ENCODE measurements at regions of chr1 and their contacts with region 1.

Region 1: DNA sequence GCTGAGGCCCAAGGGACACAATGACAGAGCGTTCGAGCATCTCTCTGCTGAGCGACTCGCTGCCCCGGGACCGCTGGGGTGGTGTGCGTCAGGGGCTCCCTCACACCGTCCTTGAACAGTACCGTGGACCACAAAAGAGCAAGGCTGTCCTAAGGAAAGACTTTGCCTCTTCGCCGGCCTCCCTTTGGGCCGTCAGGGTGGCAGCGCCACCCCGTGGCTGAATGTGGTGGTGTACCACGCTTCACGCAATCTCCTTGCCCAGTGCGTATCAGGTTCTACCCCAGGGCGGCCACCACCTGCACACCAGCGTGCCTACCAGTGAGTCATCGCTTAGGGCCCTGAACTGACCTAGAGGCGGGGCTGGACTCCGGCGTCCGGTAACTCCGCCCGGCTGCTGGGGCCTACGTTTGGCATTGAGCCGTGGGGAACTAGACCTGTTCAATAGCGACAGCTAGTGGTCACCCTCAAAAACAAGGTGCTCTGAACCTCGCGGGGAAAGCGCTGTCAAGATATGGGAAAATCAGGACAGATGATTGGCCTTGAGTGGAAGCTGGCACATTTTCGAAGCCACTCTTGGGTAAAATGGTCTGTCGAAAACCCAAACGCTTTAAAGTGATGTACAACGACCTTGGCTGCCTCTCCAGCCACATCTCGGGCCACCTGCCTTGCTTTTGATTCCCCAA is 8.1 kb upstream of the TRAF3IP3 start:
- DNase-seq: peak; percentile 98
- ATAC-seq: peak; percentile 100
- H3K4me3 ChIP-seq: no peak overlapping the region
- H3K27ac ChIP-seq: no peak overlapping the region
- H3K4me1 ChIP-seq: peaks cover 0 to 14% of the 10 kb centered on the region in 2 experiments; a peak in 2 of 4 replicates
- H3K27me3 ChIP-seq: no peaks in the 10 kb centered on the region
- CTCF ChIP-seq: peak; percentile 88 to 97 (median 94)
- POLR2A ChIP-seq: no peak
- RAD21 ChIP-seq: peak; percentile 87

Region 2: GRCh38 chr1:209576798-209577197 is 170.9 kb before region 1 on chr1:
- CTCF ChIA-PET with region 1: interaction called, 8 read pairs
- POLR2A ChIA-PET with region 1: no interaction called
- RAD21 ChIA-PET with region 1: interaction called in 1 of 2 experiments, 3 read pairs
- intact Hi-C with region 1: loop called (anchors 1 kb)
- DNase-seq: peak; percentile 73
- ATAC-seq: peak; percentile 100
- H3K4me3 ChIP-seq: no peak overlapping the region
- H3K27ac ChIP-seq: no peak overlapping the region
- H3K4me1 ChIP-seq: peaks cover 0 to 9% of the 10 kb centered on the region in 2 experiments; a peak in 1 of 4 replicates
- H3K27me3 ChIP-seq: 0 out of 2 replicates have a peak, but pooled peaks cover 16% of the 10 kb centered on the region
- CTCF ChIP-seq: peak; percentile 92 to 96 (median 93)
- POLR2A ChIP-seq: no peak
- RAD21 ChIP-seq: peak; percentile 95

Region 3: DNA sequence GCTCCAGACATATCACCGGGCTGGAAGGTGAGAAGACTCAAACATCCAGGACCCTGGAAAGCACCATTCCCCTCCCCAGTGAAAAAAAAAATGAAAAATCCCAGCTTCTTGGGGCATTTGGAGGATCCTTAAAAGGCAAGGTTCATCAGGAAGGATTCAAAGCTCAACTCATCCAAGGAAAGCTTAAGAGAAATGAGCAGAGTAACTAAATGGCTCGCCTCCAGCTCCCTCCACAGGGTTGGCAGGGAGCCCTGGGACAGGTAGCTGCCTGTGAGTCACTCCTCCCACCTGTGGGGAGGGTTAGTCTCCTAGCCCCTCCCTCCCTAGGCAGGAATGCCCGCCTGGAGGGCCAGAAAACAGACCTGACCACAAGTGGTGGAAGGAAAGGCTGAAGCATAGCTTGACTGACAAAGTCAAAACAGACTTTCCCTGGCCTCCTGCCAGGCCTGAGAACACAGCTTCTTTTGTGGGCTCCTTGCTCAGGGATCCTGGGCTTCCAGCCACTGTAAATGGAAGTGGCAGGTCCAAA is 94.8 kb before region 1 on chr1:
- CTCF ChIA-PET with region 1: interaction called, 7 read pairs
- POLR2A ChIA-PET with region 1: interaction called, 3 read pairs
- RAD21 ChIA-PET with region 1: no interaction called
- intact Hi-C with region 1: loop called (anchors 1 kb)
- DNase-seq: peak; percentile 98
- ATAC-seq: peak; percentile 74
- H3K4me3 ChIP-seq: peak overlapping the region; percentile 46 to 57
- H3K27ac ChIP-seq: peak overlapping the region; percentile 74
- H3K4me1 ChIP-seq: peaks cover 71 to 98% of the 10 kb centered on the region in 2 experiments
- H3K27me3 ChIP-seq: no peaks in the 10 kb centered on the region
- CTCF ChIP-seq: no peak
- POLR2A ChIP-seq: no peak
- RAD21 ChIP-seq: no peak

Region 4: DNA sequence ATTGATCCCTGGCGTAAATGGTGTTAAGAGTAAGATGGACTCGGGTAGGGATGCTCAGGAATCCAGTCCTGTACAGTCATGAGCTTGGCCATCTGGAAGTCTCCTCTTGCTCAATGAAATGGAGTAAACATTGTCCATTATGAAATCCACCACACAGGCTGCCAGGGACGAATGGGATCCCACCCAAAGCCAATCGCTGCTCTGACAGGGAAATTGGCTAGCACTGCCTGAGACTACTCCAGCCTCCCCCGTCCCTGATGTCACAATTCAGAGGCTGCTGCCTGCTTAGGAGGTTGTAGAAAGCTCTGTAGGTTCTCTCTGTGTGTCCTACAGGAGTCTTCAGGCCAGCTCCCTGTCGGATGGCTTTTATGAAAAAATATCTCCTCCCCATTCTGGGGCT is 43.1 kb before region 1 on chr1 and contains the start of gene HSD11B1:
- CTCF ChIA-PET with region 1: no interaction called
- POLR2A ChIA-PET with region 1: no interaction called
- RAD21 ChIA-PET with region 1: no interaction called
- intact Hi-C with region 1: loop called (anchors 2 kb)
- DNase-seq: no peak
- ATAC-seq: no peak
- H3K4me3 ChIP-seq: no peak within 1 kb of the TSS
- H3K27ac ChIP-seq: no peak within 1 kb of the TSS
- H3K4me1 ChIP-seq: no peaks in the 10 kb centered on the region
- H3K27me3 ChIP-seq: peaks cover 5% of the 10 kb centered on the region; the same call in 1 of the 2 replicates
- CTCF ChIP-seq: no peak
- POLR2A ChIP-seq: no peak
- RAD21 ChIP-seq: no peak
- total RNA-seq, gene HSD11B1: 0.27 TPM

Region 5: DNA sequence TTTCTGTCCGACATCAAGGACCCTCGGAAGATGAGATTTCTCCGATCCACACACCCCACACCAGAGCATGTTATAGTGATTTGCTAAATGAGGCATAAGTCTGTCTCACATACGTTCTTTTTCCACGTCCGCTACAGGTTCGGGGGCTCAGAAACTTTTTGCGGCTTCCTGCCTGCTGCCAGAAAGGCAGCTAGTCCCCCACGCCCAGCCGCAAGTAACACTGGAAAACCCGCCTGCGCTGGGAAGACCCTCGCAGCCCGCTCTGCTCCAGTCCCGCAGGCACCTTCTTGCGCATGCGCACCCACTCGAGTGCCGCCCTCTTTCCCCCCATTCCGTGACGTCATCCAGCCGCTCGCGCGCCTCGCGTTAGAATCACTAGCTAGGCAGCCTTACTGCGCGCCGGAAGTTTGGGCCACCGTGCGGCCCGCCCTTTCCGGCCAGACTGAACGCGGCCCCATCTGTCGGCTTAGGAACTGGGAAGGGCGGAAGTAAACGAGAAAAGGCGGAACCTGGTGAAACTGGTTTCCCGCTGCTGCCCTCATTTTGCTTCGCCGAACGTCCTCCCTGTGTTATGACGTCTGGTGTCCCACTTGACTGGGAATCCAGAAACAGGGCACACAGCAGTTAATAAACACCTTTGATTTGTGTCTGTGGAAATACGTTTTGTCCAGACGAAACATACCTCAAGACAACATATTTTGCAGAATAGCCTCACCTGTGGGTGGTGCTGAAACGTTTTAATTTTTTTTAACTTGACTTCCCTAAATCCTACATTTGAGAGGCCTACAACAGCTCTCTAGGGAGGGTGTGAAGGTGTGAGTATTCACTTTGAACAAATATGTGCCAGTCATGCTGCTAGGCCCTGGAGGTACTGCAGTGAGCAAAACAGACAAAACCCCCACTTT is 36.8 kb after region 1 on chr1 and contains the start of gene C1orf74:
- CTCF ChIA-PET with region 1: no interaction called
- POLR2A ChIA-PET with region 1: no interaction called
- RAD21 ChIA-PET with region 1: no interaction called
- intact Hi-C with region 1: loop called (anchors 1 kb)
- DNase-seq: peak; percentile 93
- ATAC-seq: peak; percentile 99
- H3K4me3 ChIP-seq: peak within 1 kb of the TSS; percentile 89 to 93
- H3K27ac ChIP-seq: peak within 1 kb of the TSS; percentile 68
- H3K4me1 ChIP-seq: peaks cover 6 to 15% of the 10 kb centered on the region in 2 experiments
- H3K27me3 ChIP-seq: no peaks in the 10 kb centered on the region
- CTCF ChIP-seq: no peak
- POLR2A ChIP-seq: peak; percentile 82
- RAD21 ChIP-seq: no peak
- total RNA-seq, gene C1orf74: 5.6 TPM

Region 6: GRCh38 chr1:209797978-209798639 is 50.4 kb after region 1 on chr1:
- CTCF ChIA-PET with region 1: no interaction called
- POLR2A ChIA-PET with region 1: no interaction called
- RAD21 ChIA-PET with region 1: no interaction called
- intact Hi-C with region 1: no loop called
- DNase-seq: no peak
- ATAC-seq: peak; percentile 83
- H3K4me3 ChIP-seq: no peak overlapping the region
- H3K27ac ChIP-seq: no peak overlapping the region
- H3K4me1 ChIP-seq: 0 out of 4 replicates have a peak, but pooled peaks cover 0 to 2% of the 10 kb centered on the region in 2 experiments
- H3K27me3 ChIP-seq: no peaks in the 10 kb centered on the region
- CTCF ChIP-seq: peak; percentile 22 to 58 (median 41); a peak in 5 of 6 replicates
- POLR2A ChIP-seq: no peak
- RAD21 ChIP-seq: peak; percentile 27; the same call in 1 of the 2 replicates